ENCODE measurements at regions of chr1 and their contacts with region 1.

Region 1: GRCh38 chr1:159924981-159925712 is at the start of gene TAGLN2:
- DNase-seq: peak; percentile 96
- ATAC-seq: peak; percentile 84
- total RNA-seq, gene TAGLN2: 116 TPM

Region 2: GRCh38 chr1:159854693-159855192 is 70.4 kb before region 1 on chr1:
- intact Hi-C with region 1: loop called (anchors 10 kb)
- DNase-seq: peak; percentile 95
- ATAC-seq: peak; percentile 98

Region 3: DNA sequence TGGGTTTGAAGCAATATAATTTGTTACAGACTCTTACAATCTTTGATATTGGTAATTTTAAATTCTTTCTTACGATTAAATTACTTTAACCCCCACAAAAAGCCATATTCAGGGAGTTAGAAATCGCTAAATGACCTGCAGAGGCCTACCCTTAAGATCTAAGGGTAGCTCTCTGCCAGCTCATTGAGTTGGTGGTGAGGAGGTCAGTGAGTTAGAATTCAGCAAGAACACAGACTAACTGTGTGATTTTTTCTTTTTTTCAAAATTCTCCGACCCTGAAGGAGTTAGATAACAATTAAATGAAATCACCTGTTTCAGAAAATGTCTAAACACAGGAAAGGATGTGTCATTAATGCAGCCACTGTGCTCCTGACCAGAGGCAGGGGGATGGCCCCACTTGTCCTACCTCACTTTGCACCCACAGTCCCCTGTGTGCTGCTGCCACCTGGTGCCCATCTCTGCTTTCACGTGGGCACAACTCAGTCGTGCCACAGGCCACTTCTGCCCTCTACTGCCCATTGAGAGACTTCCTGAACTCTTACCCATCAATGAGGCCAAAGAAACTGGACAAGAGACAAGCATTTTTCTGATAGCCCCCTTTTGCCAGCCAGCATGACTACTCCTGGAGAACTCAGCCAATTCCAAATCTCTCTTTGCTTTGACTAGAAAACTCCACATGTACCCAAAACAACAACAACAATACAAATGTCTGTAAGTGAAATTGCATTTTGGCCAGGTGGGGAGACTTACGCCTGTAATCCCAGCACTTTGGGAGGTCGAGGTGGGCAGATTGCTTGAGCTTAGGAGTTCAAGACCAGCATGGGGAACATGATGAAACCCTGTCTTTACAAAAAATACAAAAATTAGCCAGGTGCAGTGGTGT is 33.6 kb before region 1 on chr1:
- intact Hi-C with region 1: no loop called
- DNase-seq: peak; percentile 88
- ATAC-seq: peak; percentile 93

Measured in Right ventricle myocardium superior (tissue), 1 donor.